Activated naive CD4-positive, alpha-beta T cell treated with anti-CD3 and anti-CD28 coated beads, Interleukin-2, amount 10 ng/mL, durations not matched to agents 7 days and 5 days (primary cell): ENCODE measurements at regions of chr12 and their contacts with region 1.

Region 1: GRCh38 chr12:107105410-107105703 is 12.0 kb upstream of the CRY1 start:
- DNase-seq: no peak
- H3K4me3 Mint-ChIP-seq: no peak overlapping the region
- H3K27ac Mint-ChIP-seq: no peak overlapping the region
- H3K4me1 Mint-ChIP-seq: no peaks in the 10 kb centered on the region
- H3K27me3 Mint-ChIP-seq: peaks cover 6% of the 10 kb centered on the region

Region 2: DNA sequence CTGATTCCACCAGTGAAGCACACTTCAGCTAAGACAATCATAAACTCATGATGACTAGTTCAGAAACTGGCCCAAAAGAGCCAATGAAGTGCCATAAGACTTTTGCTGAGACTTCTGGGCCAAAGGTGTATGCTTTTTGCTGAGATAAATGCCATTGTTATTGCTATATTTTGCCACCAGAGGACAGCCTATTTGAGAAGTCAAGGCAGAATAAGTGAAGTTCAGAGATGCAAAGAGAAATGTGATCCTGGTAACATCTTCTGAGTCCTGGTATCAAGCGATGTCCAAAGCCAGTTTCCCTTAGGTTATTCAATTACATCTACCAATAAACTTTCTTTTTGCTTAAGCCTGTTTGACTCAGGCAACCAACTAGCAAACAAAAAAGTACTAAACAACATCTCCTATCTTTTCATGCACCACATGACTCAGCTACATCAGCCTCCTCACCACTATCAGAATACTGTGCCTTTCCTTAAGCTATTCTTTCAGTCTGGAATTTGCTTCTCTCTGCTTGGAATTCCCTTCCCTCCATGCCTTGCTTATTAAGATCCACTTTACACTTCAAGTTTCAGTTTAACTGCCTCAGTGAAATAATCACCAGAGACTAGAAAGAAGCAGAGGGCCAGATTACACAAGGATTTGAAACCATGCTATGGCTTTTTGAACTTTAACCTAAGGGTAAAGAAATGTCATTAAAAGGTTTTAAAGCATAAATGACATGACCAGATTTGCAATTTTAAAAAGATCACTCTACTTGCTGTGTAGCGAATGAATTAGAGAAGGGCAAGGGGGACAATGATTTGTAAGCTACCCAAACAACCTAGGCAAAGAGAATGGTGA is 26.0 kb before region 1 on chr12:
- CTCF ChIA-PET with region 1: interaction called, 12 read pairs
- DNase-seq: no peak
- H3K4me3 Mint-ChIP-seq: no peak overlapping the region
- H3K27ac Mint-ChIP-seq: no peak overlapping the region
- H3K4me1 Mint-ChIP-seq: no peaks in the 10 kb centered on the region
- H3K27me3 Mint-ChIP-seq: no peaks in the 10 kb centered on the region

Region 3: DNA sequence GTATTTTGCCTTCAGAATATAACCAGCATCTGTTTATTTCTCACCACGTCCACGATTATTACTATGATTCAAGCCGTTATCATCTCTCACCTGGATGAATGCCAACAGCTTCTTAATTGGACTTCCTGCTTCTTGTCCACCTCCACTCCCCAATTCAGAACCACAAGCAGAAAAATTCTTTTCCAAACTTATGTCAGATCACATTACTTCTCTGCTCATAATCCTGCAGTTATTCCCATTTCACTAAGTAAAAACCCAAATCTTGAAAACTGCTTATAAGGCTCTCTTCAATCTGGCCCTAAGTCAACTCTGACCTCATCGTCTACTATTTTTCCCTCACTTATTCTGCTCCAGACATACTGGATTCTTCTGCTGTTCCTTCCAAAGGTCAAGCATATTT is 14.0 kb before region 1 on chr12:
- CTCF ChIA-PET with region 1: interaction called, 13 read pairs
- DNase-seq: no peak
- H3K4me3 Mint-ChIP-seq: no peak overlapping the region
- H3K27ac Mint-ChIP-seq: no peak overlapping the region
- H3K4me1 Mint-ChIP-seq: peaks cover 13% of the 10 kb centered on the region
- H3K27me3 Mint-ChIP-seq: peaks cover 9% of the 10 kb centered on the region